ENCODE measurements at regions of chr10 and their contacts with region 1.

Region 1: GRCh38 chr10:73131301-73131700 is 21.0 kb downstream of the NUDT13 start:
- DNase-seq: peak; percentile 40
- H3K4me3 Mint-ChIP-seq: no peak overlapping the region
- H3K27ac Mint-ChIP-seq: no peak overlapping the region
- H3K4me1 Mint-ChIP-seq: peaks cover 6% of the 10 kb centered on the region
- H3K27me3 Mint-ChIP-seq: no peaks in the 10 kb centered on the region
- CTCF ChIP-seq: no peak

Region 2: GRCh38 chr10:73159038-73159648 is 27.8 kb after region 1 on chr10:
- CTCF ChIA-PET with region 1: interaction called, 11 read pairs
- POLR2A ChIA-PET with region 1: interaction called, 3 read pairs
- intact Hi-C with region 1: no loop called
- DNase-seq: peak; percentile 69
- H3K4me3 Mint-ChIP-seq: no peak overlapping the region
- H3K27ac Mint-ChIP-seq: no peak overlapping the region
- H3K4me1 Mint-ChIP-seq: peaks cover 24% of the 10 kb centered on the region
- H3K27me3 Mint-ChIP-seq: no peaks in the 10 kb centered on the region
- CTCF ChIP-seq: peak; percentile 71

Measured in MCF 10A (cell line).